Activated CD4-positive, alpha-beta T cell treated with anti-CD3 and anti-CD28 coated beads, Interleukin-2, amount 10 ng/mL, durations not matched to agents 24 days and 14 days (primary cell): ENCODE measurements at regions of chr12 and their contacts with region 1.

Region 1: GRCh38 chr12:4648501-4649357 is at the starts of genes AKAP3 and NDUFA9:
- DNase-seq: peak; percentile 94
- H3K4me3 Mint-ChIP-seq: peak within 1 kb of the TSS; percentile 98
- H3K27ac Mint-ChIP-seq: peak within 1 kb of the TSS; percentile 96
- H3K4me1 Mint-ChIP-seq: peaks cover 36% of the 10 kb centered on the region
- H3K27me3 Mint-ChIP-seq: peaks cover 5% of the 10 kb centered on the region
- total RNA-seq, gene AKAP3: 0.42 and 1.1 TPM in 2 replicates
- total RNA-seq, gene NDUFA9: 130 and 139 TPM in 2 replicates

Region 2: GRCh38 chr12:4538207-4539160 is 110.2 kb before region 1 on chr12 and contains the start of gene RAD51AP1:
- intact Hi-C with region 1: loop called (anchors 1 kb)
- DNase-seq: peak; percentile 98
- H3K4me3 Mint-ChIP-seq: peak within 1 kb of the TSS; percentile 96
- H3K27ac Mint-ChIP-seq: peak within 1 kb of the TSS; percentile 93
- H3K4me1 Mint-ChIP-seq: peaks cover 29% of the 10 kb centered on the region
- H3K27me3 Mint-ChIP-seq: no peaks in the 10 kb centered on the region
- total RNA-seq, gene RAD51AP1: 31.4 and 35.8 TPM in 2 replicates

Region 3: GRCh38 chr12:4604684-4605193 is 44.0 kb before region 1 on chr12:
- intact Hi-C with region 1: loop called (anchors 1 kb)
- DNase-seq: peak; percentile 94
- H3K4me3 Mint-ChIP-seq: peak overlapping the region; percentile 91
- H3K27ac Mint-ChIP-seq: peak overlapping the region; percentile 91
- H3K4me1 Mint-ChIP-seq: peaks cover 7% of the 10 kb centered on the region
- H3K27me3 Mint-ChIP-seq: peaks cover 19% of the 10 kb centered on the region